HEK293 (cell line): ENCODE measurements at regions of chr5 and their contacts with region 1.

Region 1: DNA sequence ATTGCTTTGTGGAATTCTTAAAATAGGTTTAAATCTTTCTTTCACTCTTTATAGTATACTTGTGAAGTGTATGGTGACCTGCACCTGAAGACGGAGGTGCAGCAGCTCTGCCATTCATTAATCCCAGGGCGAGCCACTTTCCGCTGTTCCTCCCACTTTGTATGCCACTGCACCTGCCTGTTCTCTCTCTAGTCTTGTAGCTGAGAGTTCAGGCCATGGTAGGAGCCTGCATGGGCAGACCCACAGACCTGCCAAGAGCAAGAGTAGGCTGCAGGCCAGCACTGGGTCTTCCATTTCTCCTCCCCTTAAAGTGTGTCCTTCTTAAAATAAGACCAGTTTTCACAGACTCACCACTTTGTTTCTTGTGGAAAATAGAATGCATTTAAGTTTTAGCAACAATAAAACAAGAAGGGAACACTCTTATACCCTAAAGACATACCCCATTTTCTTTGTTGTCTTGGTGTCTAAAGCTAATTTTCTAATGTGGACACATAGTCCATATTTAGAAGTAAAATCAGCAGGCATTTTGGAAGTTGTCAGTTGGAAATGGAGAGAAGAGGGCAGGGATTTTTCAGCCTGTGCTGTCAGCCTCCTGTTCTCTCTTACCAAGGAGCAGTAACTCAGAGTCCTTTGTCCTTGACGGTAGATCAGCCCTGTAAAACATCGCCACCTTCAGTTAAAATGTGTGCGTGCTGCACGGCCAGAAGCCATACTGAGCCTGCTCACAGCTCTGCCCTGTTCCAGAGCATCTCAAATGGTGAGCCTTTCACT is 103.2 kb downstream of the SNCAIP start:
- H3K4me3 ChIP-seq: no peak overlapping the region
- H3K27ac ChIP-seq: no peak overlapping the region
- H3K4me1 ChIP-seq: peaks cover 3% of the 10 kb centered on the region; the same call in 1 of the 2 replicates
- CTCF ChIP-seq: peak; percentile 69

Region 2: GRCh38 chr5:122291000-122291901 is 124.0 kb before region 1 on chr5:
- CTCF ChIA-PET with region 1: interaction called, 11 read pairs
- POLR2A ChIA-PET with region 1: no interaction called
- H3K4me3 ChIP-seq: no peak overlapping the region
- H3K27ac ChIP-seq: no peak overlapping the region
- H3K4me1 ChIP-seq: peaks cover 12% of the 10 kb centered on the region; the same call in 1 of the 2 replicates
- CTCF ChIP-seq: no peak

Region 3: GRCh38 chr5:122401976-122402725 is 13.1 kb before region 1 on chr5:
- CTCF ChIA-PET with region 1: interaction called, 17 read pairs
- POLR2A ChIA-PET with region 1: no interaction called
- H3K4me3 ChIP-seq: no peak overlapping the region
- H3K27ac ChIP-seq: no peak overlapping the region
- H3K4me1 ChIP-seq: no peaks in the 10 kb centered on the region
- CTCF ChIP-seq: no peak